ENCODE measurements at regions of chr10 and their contacts with region 1.

Region 1: DNA sequence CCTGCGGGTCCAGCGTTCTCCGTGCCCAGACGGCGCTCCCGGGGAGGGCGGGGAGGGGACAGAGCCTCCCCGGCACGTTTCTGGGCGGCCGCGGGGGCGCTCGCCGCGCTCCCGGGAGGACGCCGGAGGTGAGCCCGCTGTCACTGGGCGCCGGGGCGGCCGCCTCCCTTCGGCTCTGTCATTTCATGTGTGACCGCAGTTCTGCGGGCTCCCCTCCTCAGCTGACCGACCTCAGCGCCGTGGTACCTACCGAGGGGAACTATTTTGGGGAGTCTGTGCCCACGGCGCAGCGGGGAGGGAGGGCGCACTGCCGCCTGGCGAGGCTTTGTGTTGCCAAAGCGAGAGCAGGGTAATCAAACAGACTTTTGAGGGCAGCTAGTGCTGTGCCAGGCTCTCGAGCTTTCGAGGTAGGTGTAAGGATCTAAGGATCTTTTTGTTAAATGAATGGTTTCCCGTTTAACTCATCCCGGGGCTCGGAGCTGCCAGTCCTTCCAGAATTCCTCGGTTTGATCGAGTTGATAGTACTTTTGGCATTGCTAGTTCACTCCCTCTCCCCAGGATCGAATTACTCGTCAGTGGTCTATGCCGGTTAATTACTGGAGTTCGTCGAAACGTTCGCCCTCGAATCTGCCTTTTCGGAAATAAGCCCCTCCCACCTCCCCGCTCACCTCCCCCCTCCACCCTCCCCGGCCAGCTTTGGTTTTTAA is 1.9 kb downstream of the ARID5B start:
- DNase-seq: peak; percentile 83
- ATAC-seq: peak; percentile 74

Region 2: GRCh38 chr10:61812052-61812721 is 91.2 kb before region 1 on chr10:
- intact Hi-C with region 1: no loop called
- DNase-seq: no peak
- ATAC-seq: no peak

Region 3: GRCh38 chr10:61943674-61944410 is 40.5 kb after region 1 on chr10:
- intact Hi-C with region 1: loop called (anchors 5 kb)
- DNase-seq: no peak
- ATAC-seq: peak; percentile 31

Region 4: DNA sequence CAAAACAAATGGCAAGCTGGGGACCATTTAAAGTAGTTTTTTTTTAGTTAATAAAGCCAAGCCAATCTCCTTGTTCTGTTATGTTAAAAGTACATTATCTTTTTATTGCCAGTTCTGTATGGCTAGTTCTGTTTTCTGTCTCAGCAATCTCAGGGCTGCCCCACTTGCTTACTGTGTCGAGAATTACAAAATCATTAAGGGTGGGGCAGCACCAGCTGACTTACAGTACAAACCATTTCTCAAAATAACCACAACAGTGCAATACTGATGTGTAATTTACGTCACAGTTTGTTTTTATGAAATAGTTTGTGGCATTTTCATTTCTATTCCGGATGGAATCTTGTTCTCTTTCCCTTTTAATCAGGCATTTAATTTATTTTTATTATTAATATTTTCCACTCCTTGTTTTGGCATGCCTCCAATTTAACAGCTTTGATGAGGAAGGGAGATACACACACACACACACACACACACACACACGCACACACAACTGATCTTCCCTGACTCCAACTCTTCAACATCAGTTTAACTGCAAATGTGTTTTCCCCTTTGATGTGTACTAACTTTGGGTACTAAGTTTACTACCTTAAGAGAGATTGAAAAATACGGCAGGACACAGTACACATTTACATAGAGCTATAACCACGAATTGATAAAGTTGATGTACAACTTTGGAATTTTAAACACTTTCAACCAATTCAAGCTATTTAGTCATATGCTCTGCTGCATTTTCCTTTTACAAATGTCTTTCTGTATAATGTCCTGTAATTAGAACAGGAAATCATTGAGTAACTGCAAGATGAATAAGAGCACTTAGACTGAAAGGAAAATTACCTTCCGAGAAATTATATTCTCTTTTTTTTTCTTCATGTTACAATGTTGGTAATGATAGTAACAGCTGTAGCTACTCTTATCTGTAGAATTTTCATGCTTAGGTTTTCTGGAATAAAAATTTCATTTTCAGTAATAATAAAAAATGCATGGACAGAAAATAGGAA is 89.6 kb after region 1 on chr10:
- intact Hi-C with region 1: loop called (anchors 2 kb)
- DNase-seq: peak; percentile 71
- ATAC-seq: peak; percentile 95

Region 5: GRCh38 chr10:62048919-62049623 is 145.7 kb after region 1 on chr10:
- intact Hi-C with region 1: loop called (anchors 5 kb)
- DNase-seq: peak; percentile 84
- ATAC-seq: peak; percentile 93